ENCODE measurements at regions of chr13 and their contacts with region 1.

Region 1: DNA sequence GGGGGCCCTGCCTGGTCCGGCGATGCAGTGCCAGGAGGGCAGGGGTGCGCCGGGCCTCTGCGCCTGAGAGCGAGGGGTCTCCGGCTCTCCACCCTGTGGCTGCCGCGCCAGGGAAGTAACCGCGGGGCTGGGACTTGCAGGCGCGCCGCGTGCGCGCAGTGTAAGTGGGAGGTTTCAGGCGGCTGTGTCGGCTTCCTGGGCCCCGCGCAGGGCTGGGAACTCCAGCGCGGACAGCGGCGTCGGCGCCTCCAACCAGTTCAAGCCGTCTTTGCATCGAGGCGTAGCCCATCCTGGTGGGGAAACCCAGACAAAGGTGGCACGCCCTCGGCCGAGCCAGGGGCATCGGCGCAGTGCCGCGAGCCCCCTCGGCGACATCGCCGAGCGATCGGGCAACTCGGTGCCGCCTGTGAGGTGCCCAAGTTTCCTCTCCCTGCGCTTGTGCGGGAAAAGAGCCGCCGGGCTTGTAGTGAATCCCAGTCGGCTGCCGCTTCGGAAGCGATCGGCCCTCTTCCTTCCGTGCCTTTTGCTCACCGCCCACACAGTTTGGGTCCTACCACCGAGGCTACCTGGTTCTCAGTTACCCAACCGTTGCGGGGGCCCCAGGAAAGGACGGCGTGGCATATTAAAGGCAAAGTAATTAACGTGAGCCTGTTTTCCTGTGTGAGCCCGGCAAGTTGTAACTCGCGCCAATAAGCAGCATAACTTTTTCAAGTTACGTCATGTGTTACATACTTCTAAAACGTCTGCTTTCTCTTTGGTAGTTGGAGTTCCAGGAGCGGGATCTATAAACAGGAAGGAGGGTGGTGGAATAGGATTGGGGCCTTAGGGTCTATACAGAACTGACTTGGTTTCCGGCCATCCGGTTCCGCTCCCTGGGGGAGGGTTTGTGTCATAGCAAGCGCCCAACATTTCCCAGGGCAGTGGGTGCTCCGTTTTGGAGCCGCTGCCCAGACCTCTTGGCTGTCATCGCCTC is 1.2 kb downstream of the LRCH1 start:
- DNase-seq: peak; percentile 50 to 79 (median 58)
- ATAC-seq: peak; percentile 78
- H3K4me3 ChIP-seq: peak overlapping the region; percentile 77
- H3K27ac ChIP-seq: peak overlapping the region; percentile 78
- H3K4me1 ChIP-seq: peaks cover 9 to 17% of the 10 kb centered on the region in 2 experiments; a peak in 4 of 5 replicates
- H3K27me3 ChIP-seq: no peaks in the 10 kb centered on the region
- CTCF ChIP-seq: peak in 2 of 3 experiments; percentile 9 to 30; a peak in 2 of 6 replicates
- EP300 ChIP-seq: 0 out of 2 replicates have a peak, but pooled peaks have one; percentile 4
- POLR2A ChIP-seq: peak; percentile 54
- RAD21 ChIP-seq: no peak

Region 2: GRCh38 chr13:46369506-46370277 is 184.5 kb before region 1 on chr13:
- CTCF ChIA-PET with region 1: no interaction called
- POLR2A ChIA-PET with region 1: no interaction called
- in situ Hi-C with region 1: no loop called
- intact Hi-C with region 1: no loop called
- DNase-seq: no peak
- ATAC-seq: no peak
- H3K4me3 ChIP-seq: no peak overlapping the region
- H3K27ac ChIP-seq: no peak overlapping the region
- H3K4me1 ChIP-seq: no peaks in the 10 kb centered on the region; a peak in 2 of 5 replicates
- H3K27me3 ChIP-seq: peaks cover 4 to 21% of the 10 kb centered on the region in 2 experiments; a peak in 4 of 5 replicates
- CTCF ChIP-seq: no peak
- EP300 ChIP-seq: no peak
- POLR2A ChIP-seq: no peak
- RAD21 ChIP-seq: no peak

Region 3: DNA sequence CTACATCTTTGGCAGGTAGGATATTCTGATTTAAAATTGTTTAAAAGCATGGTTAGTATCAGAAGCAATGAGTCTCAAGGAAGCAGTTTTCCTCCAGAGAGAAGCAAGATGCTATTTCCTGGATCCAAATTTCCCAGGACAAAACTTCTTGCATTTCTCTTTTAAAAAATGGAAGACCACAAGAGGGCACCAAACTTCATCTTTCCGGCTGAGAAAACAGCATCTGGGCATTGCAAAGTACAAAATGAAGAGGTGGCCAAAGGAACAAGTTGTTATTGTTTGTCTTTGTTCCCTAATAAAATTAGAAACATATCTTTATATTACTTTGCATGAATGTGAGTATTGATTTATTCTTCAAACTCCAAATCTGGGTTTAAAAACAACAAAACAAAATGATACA is 61.2 kb before region 1 on chr13:
- CTCF ChIA-PET with region 1: no interaction called
- POLR2A ChIA-PET with region 1: no interaction called
- in situ Hi-C with region 1: no loop called
- intact Hi-C with region 1: loop called (anchors 2 kb)
- DNase-seq: peak; percentile 13 to 41 (median 16)
- ATAC-seq: no peak
- H3K4me3 ChIP-seq: no peak overlapping the region
- H3K27ac ChIP-seq: no peak overlapping the region
- H3K4me1 ChIP-seq: no peaks in the 10 kb centered on the region
- H3K27me3 ChIP-seq: peaks cover 0 to 9% of the 10 kb centered on the region in 2 experiments; a peak in 1 of 5 replicates
- CTCF ChIP-seq: peak; percentile 19 to 62 (median 40); a peak in 3 of 6 replicates
- EP300 ChIP-seq: no peak
- POLR2A ChIP-seq: no peak
- RAD21 ChIP-seq: peak; percentile 69 to 72

Region 4: GRCh38 chr13:46614582-46614981 is 60.4 kb after region 1 on chr13:
- CTCF ChIA-PET with region 1: no interaction called
- POLR2A ChIA-PET with region 1: no interaction called
- in situ Hi-C with region 1: no loop called
- intact Hi-C with region 1: no loop called
- DNase-seq: no peak
- ATAC-seq: no peak
- H3K4me3 ChIP-seq: no peak overlapping the region
- H3K27ac ChIP-seq: no peak overlapping the region
- H3K4me1 ChIP-seq: 0 out of 5 replicates have a peak, but pooled peaks cover 0 to 8% of the 10 kb centered on the region in 2 experiments
- H3K27me3 ChIP-seq: no peaks in the 10 kb centered on the region
- CTCF ChIP-seq: no peak
- EP300 ChIP-seq: no peak
- POLR2A ChIP-seq: no peak
- RAD21 ChIP-seq: no peak

Region 5: DNA sequence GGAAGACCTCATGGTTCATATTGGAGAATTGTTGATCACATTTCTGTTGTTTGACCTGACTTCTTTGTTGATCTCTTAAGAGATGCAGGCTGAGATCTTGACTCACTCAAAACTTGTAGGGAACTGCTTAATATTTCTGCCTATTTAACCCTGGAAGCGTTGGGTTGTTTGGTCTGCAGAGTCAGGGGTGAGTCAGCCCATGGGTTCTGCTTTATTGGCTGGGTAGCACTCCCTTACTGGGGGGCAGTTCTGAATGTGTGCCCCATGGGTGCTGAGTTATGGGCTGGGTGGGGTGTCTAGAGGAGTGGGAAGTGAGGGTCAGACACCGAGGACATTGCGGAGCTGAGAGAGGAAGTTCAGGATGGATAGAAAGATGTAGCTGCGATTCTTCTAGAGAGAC is 86.7 kb after region 1 on chr13:
- CTCF ChIA-PET with region 1: no interaction called
- POLR2A ChIA-PET with region 1: no interaction called
- in situ Hi-C with region 1: no loop called
- intact Hi-C with region 1: loop called (anchors 5 kb)
- DNase-seq: no peak
- ATAC-seq: no peak
- H3K4me3 ChIP-seq: no peak overlapping the region
- H3K27ac ChIP-seq: no peak overlapping the region
- H3K4me1 ChIP-seq: peaks cover 0 to 10% of the 10 kb centered on the region in 2 experiments; a peak in 4 of 5 replicates
- H3K27me3 ChIP-seq: no peaks in the 10 kb centered on the region
- CTCF ChIP-seq: no peak
- EP300 ChIP-seq: no peak
- POLR2A ChIP-seq: no peak
- RAD21 ChIP-seq: no peak

Region 6: GRCh38 chr13:46909042-46909441 is 354.9 kb after region 1 on chr13:
- CTCF ChIA-PET with region 1: no interaction called
- POLR2A ChIA-PET with region 1: no interaction called
- in situ Hi-C with region 1: no loop called
- intact Hi-C with region 1: no loop called
- DNase-seq: no peak
- ATAC-seq: no peak
- H3K4me3 ChIP-seq: no peak overlapping the region
- H3K27ac ChIP-seq: no peak overlapping the region
- H3K4me1 ChIP-seq: no peaks in the 10 kb centered on the region
- H3K27me3 ChIP-seq: no peaks in the 10 kb centered on the region
- CTCF ChIP-seq: no peak
- EP300 ChIP-seq: no peak
- POLR2A ChIP-seq: no peak
- RAD21 ChIP-seq: no peak

Measured in K562 (cell line).